ENCODE measurements at regions of chr10 and their contacts with region 1.

Region 1: GRCh38 chr10:101952191-101952590 is 103.8 kb downstream of the ARMH3 start:
- DNase-seq: no peak
- H3K4me3 ChIP-seq: no peak overlapping the region
- H3K27ac ChIP-seq: no peak overlapping the region
- H3K27me3 ChIP-seq: no peaks in the 10 kb centered on the region
- CTCF ChIP-seq: no peak

Region 2: GRCh38 chr10:101848894-101849351 is 103.3 kb before region 1 on chr10:
- CTCF ChIA-PET with region 1: no interaction called
- POLR2A ChIA-PET with region 1: interaction called, 14 read pairs
- DNase-seq: no peak
- H3K4me3 ChIP-seq: no peak overlapping the region
- H3K27ac ChIP-seq: no peak overlapping the region
- H3K27me3 ChIP-seq: peaks cover 3% of the 10 kb centered on the region
- CTCF ChIP-seq: no peak

Region 3: GRCh38 chr10:101906586-101907183 is 45.5 kb before region 1 on chr10:
- CTCF ChIA-PET with region 1: no interaction called
- POLR2A ChIA-PET with region 1: no interaction called
- DNase-seq: no peak
- H3K4me3 ChIP-seq: no peak overlapping the region
- H3K27ac ChIP-seq: no peak overlapping the region
- H3K27me3 ChIP-seq: no peaks in the 10 kb centered on the region
- CTCF ChIP-seq: no peak

Region 4: GRCh38 chr10:101925027-101925426 is 27.2 kb before region 1 on chr10:
- CTCF ChIA-PET with region 1: no interaction called
- POLR2A ChIA-PET with region 1: no interaction called
- DNase-seq: no peak
- H3K4me3 ChIP-seq: no peak overlapping the region
- H3K27ac ChIP-seq: no peak overlapping the region
- H3K27me3 ChIP-seq: no peaks in the 10 kb centered on the region
- CTCF ChIP-seq: no peak

Region 5: GRCh38 chr10:102280397-102281101 is 328.4 kb after region 1 on chr10:
- CTCF ChIA-PET with region 1: no interaction called
- POLR2A ChIA-PET with region 1: no interaction called
- DNase-seq: no peak
- H3K4me3 ChIP-seq: peak overlapping the region; percentile 20
- H3K27ac ChIP-seq: no peak overlapping the region
- H3K27me3 ChIP-seq: no peaks in the 10 kb centered on the region
- CTCF ChIP-seq: no peak

Region 6: DNA sequence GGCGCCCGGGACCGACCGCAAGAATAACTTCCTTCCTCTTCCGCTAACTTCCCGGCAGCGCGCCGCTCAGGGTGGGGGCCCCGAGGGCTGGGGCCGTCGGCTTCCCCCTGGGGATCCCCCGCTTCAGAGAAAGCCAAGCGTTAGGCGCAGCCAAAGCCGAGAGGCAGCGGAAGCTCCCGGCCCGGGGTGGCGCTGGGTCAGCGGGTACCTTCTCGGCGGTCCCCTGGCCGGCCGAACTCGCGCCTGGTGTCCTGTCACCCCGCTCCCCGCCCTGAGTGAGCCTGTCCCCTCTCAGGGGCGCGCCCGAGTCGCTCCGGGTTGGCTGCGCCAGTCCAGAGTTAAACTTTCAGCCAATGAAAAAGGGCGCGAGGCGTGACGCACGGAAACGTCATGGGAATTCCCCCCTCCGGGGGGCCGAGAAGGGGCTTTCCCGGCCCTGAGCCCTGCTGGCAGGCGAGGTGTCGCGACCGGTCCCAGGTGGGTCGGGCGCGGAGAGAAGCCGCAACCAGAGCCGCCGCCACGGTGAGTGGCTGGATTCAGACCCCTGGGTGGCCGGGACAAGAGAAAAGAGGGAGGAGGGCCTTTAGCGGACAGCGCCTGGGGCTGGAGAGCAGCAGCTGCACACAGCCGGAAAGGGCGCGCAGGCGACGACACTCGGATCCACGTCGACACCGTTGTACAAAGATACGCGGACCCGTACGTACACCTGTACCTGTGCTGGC is 442.0 kb after region 1 on chr10:
- CTCF ChIA-PET with region 1: no interaction called
- POLR2A ChIA-PET with region 1: no interaction called
- DNase-seq: peak; percentile 82
- H3K4me3 ChIP-seq: peak overlapping the region; percentile 82
- H3K27ac ChIP-seq: peak overlapping the region; percentile 99
- H3K27me3 ChIP-seq: peaks cover 3% of the 10 kb centered on the region
- CTCF ChIP-seq: no peak